Activated B cell treated with CpG ODN at 0.5 μM for 24 hours (primary cell): ENCODE measurements at regions of chr11 and their contacts with region 1.

Region 1: GRCh38 chr11:74398244-74399159 is at the start of gene PGM2L1:
- DNase-seq: peak; percentile 88
- ATAC-seq: peak; percentile 87
- H3K4me3 Mint-ChIP-seq: peak within 1 kb of the TSS; percentile 100
- H3K27ac Mint-ChIP-seq: peak within 1 kb of the TSS; percentile 97
- H3K4me1 Mint-ChIP-seq: peaks cover 7% of the 10 kb centered on the region
- H3K27me3 Mint-ChIP-seq: no peaks in the 10 kb centered on the region
- CTCF ChIP-seq: no peak
- total RNA-seq, gene PGM2L1: 3.5 and 3.8 TPM in 2 replicates

Region 2: DNA sequence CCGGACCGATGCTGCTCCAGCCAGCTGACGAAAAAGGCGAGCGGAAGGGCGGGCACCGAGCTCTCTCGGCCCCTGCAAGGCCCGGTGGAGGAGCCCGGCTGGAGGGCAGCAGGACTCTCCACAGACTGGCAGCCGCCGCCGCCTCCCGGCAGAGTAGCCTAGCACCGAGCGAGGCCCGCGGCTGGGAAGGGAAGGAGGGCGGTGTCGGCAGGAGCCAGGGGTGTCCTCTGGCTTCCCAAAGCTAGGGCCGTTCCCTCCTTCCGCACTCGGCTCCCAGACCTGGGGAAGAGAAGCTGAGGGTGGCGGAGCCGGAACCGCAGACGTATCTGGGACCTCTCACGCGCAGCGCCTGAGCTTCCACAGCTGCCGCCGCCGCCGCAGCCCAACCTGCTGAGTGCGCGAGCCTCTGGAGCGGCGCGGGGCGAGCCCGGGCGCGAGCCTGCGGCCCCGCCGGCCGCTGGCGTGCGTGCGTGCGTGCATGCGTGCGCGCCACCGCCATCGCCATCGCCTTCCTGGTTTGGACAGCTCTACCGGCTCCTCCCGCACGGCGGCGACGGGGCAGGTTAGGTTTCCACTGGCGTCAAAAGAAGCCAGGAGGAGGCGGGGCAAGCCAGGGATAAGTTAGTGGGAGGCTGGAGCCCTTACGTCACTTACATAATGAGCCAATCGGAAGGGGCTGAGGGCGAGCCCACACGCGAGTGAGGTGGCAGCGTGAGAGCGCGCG is 637.7 kb before region 1 on chr11 and contains the start of gene RAB6A:
- CTCF ChIA-PET with region 1: no interaction called
- POLR2A ChIA-PET with region 1: interaction called, 3 read pairs
- intact Hi-C with region 1: loop called (anchors 2 kb)
- DNase-seq: peak; percentile 97
- ATAC-seq: peak; percentile 88
- H3K4me3 Mint-ChIP-seq: peak within 1 kb of the TSS; percentile 91
- H3K27ac Mint-ChIP-seq: peak within 1 kb of the TSS; percentile 88
- H3K4me1 Mint-ChIP-seq: peaks cover 22% of the 10 kb centered on the region
- H3K27me3 Mint-ChIP-seq: no peaks in the 10 kb centered on the region
- CTCF ChIP-seq: no peak
- total RNA-seq, gene RAB6A: 53.3 and 61.0 TPM in 2 replicates

Region 3: GRCh38 chr11:74170694-74171629 is 227.5 kb before region 1 on chr11 and contains the starts of genes C2CD3 and PPME1:
- CTCF ChIA-PET with region 1: no interaction called
- POLR2A ChIA-PET with region 1: interaction called, 4 read pairs
- intact Hi-C with region 1: loop called (anchors 1 kb)
- DNase-seq: peak; percentile 94
- ATAC-seq: peak; percentile 93
- H3K4me3 Mint-ChIP-seq: no peak within 1 kb of the TSS
- H3K27ac Mint-ChIP-seq: no peak within 1 kb of the TSS
- H3K4me1 Mint-ChIP-seq: peaks cover 12% of the 10 kb centered on the region
- H3K27me3 Mint-ChIP-seq: no peaks in the 10 kb centered on the region
- CTCF ChIP-seq: no peak
- total RNA-seq, gene C2CD3: 36.2 and 50.3 TPM in 2 replicates
- total RNA-seq, gene PPME1: 12.4 and 17.3 TPM in 2 replicates

Region 4: GRCh38 chr11:74592441-74593362 is 194.2 kb after region 1 on chr11 and contains the start of gene POLD3:
- CTCF ChIA-PET with region 1: no interaction called
- POLR2A ChIA-PET with region 1: interaction called, 3 read pairs
- intact Hi-C with region 1: loop called (anchors 5 kb)
- DNase-seq: peak; percentile 83
- ATAC-seq: peak; percentile 99
- H3K4me3 Mint-ChIP-seq: peak within 1 kb of the TSS; percentile 94
- H3K27ac Mint-ChIP-seq: peak within 1 kb of the TSS; percentile 86
- H3K4me1 Mint-ChIP-seq: peaks cover 17% of the 10 kb centered on the region
- H3K27me3 Mint-ChIP-seq: no peaks in the 10 kb centered on the region
- CTCF ChIP-seq: no peak
- total RNA-seq, gene POLD3: 14.9 and 16.3 TPM in 2 replicates

Region 5: GRCh38 chr11:74948898-74949747 is 550.6 kb after region 1 on chr11 and contains the starts of genes SPCS2 and XRRA1:
- CTCF ChIA-PET with region 1: no interaction called
- POLR2A ChIA-PET with region 1: no interaction called
- intact Hi-C with region 1: loop called (anchors 2 kb)
- DNase-seq: peak; percentile 90
- ATAC-seq: peak; percentile 93
- H3K4me3 Mint-ChIP-seq: peak within 1 kb of the TSS; percentile 97
- H3K27ac Mint-ChIP-seq: peak within 1 kb of the TSS; percentile 97
- H3K4me1 Mint-ChIP-seq: peaks cover 72% of the 10 kb centered on the region
- H3K27me3 Mint-ChIP-seq: no peaks in the 10 kb centered on the region
- CTCF ChIP-seq: no peak
- total RNA-seq, gene SPCS2: 129 and 138 TPM in 2 replicates
- total RNA-seq, gene XRRA1: 40.0 and 50.5 TPM in 2 replicates